CD4-positive, alpha-beta T cell (primary cell): ENCODE measurements at regions of chr2 and their contacts with region 1.

Region 1: GRCh38 chr2:68909793-68910674 is 38.8 kb upstream of the BMP10 start:
- DNase-seq: peak; percentile 44 to 84 (median 66)
- ATAC-seq: no peak
- H3K4me3 ChIP-seq: no peak overlapping the region
- H3K4me3 Mint-ChIP-seq: no peak overlapping the region
- H3K27ac ChIP-seq: no peak overlapping the region
- H3K27ac Mint-ChIP-seq: no peak overlapping the region
- H3K4me1 ChIP-seq: peaks cover 60% of the 10 kb centered on the region
- H3K4me1 Mint-ChIP-seq: peaks cover 36% of the 10 kb centered on the region
- H3K27me3 ChIP-seq: no peaks in the 10 kb centered on the region
- H3K27me3 Mint-ChIP-seq: no peaks in the 10 kb centered on the region
- CTCF ChIP-seq: peak; percentile 88

Region 2: GRCh38 chr2:68709421-68709911 is 200.6 kb before region 1 on chr2:
- CTCF ChIA-PET with region 1: interaction called, 8 read pairs
- POLR2A ChIA-PET with region 1: interaction called, 19 read pairs
- intact Hi-C with region 1: loop called in 1 of 2 experiments (anchors 1 kb)
- DNase-seq: peak in 4 of 14 experiments; percentile 36 to 62 (median 58)
- ATAC-seq: peak; percentile 77
- H3K4me3 ChIP-seq: no peak overlapping the region
- H3K4me3 Mint-ChIP-seq: no peak overlapping the region
- H3K27ac ChIP-seq: no peak overlapping the region
- H3K27ac Mint-ChIP-seq: no peak overlapping the region
- H3K4me1 ChIP-seq: peaks cover 6% of the 10 kb centered on the region
- H3K4me1 Mint-ChIP-seq: peaks cover 28% of the 10 kb centered on the region
- H3K27me3 ChIP-seq: no peaks in the 10 kb centered on the region
- H3K27me3 Mint-ChIP-seq: no peaks in the 10 kb centered on the region
- CTCF ChIP-seq: peak; percentile 92

Region 3: DNA sequence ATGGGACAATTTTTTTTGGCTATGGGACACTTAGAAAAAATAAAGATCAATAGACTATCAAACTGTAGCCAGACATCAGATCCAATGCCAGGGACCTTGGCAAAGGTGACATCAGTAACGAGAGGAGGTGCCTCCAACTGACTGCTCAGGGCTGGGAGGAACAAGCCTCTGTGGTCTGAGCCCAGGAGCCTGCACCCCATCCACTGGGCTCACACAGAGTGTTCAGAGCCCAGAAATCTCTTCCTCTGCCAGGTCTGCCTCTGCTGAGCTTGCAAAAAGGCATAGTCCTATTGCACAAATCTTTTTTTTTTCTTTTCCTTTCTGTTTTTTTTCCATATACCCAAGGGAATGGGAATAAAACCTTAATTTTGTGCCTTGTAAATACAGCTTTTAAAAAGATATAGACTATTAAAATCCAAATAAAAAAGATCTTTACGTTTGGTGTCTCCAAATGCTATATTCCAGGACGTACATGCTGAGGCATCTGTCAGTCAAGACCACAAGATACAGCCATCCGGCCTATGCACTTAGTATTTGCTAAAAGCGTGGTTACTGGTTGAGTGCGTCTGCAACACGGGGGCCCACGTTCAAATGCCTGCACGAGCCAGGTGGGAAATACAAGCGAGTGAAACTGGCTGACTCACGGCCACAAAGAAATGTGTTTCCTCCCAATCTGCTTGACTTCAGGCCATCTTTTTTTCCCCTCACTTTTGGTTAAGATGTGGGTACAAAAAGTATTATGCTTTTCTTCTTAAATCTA is 183.2 kb before region 1 on chr2:
- CTCF ChIA-PET with region 1: no interaction called
- POLR2A ChIA-PET with region 1: interaction called, 23 read pairs
- intact Hi-C with region 1: no loop called
- DNase-seq: peak; percentile 52 to 92 (median 74)
- ATAC-seq: peak; percentile 97
- H3K4me3 ChIP-seq: no peak overlapping the region
- H3K4me3 Mint-ChIP-seq: peak overlapping the region; percentile 46
- H3K27ac ChIP-seq: peak overlapping the region; percentile 10 to 42
- H3K27ac Mint-ChIP-seq: peak overlapping the region; percentile 88
- H3K4me1 ChIP-seq: peaks cover 63% of the 10 kb centered on the region
- H3K4me1 Mint-ChIP-seq: peaks cover 78% of the 10 kb centered on the region
- H3K27me3 ChIP-seq: no peaks in the 10 kb centered on the region
- H3K27me3 Mint-ChIP-seq: no peaks in the 10 kb centered on the region
- CTCF ChIP-seq: no peak

Region 4: GRCh38 chr2:68766376-68766845 is 143.6 kb before region 1 on chr2:
- CTCF ChIA-PET with region 1: interaction called, 3 read pairs
- POLR2A ChIA-PET with region 1: interaction called, 10 read pairs
- intact Hi-C with region 1: no loop called
- DNase-seq: peak; percentile 48 to 89 (median 66)
- ATAC-seq: peak; percentile 71
- H3K4me3 ChIP-seq: peak overlapping the region; percentile 42
- H3K4me3 Mint-ChIP-seq: peak overlapping the region; percentile 84
- H3K27ac ChIP-seq: peak overlapping the region; percentile 89 to 93
- H3K27ac Mint-ChIP-seq: peak overlapping the region; percentile 94
- H3K4me1 ChIP-seq: peaks cover 83% of the 10 kb centered on the region
- H3K4me1 Mint-ChIP-seq: peaks cover 98% of the 10 kb centered on the region
- H3K27me3 ChIP-seq: no peaks in the 10 kb centered on the region
- H3K27me3 Mint-ChIP-seq: no peaks in the 10 kb centered on the region
- CTCF ChIP-seq: no peak

Region 5: DNA sequence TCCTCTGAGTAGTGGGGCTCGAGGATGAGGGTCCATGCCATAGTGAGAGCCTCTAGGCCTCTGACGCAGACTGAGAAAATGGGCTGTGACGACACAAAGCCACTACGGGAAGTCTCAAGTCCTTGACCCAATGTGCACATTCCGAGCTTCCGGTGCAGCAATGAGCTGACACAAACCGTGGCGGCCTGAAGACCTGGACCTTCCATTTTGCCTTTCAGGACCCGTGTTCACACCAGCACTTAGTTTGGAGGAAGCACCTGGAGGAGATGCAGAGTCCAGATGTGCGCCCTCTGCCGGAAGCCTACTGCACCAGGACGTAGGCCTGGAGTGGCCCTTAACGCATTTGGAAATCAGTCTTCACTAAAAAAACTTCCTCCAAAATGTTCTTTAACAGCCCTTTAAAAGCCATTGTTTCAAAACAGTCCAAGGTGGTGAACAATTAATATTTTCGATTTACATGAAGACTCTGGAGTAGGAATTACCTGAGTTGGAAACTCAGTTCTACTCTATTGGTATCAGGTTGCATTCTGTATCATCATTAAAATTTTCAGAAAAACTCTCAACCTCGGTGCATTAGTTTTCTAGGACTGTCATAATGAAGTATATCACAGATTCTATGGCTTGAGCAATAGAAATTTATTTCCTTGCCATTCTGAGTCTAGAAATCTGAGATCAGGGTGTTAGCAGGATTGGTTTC is 72.7 kb before region 1 on chr2:
- CTCF ChIA-PET with region 1: interaction called, 4 read pairs
- POLR2A ChIA-PET with region 1: interaction called, 3 read pairs
- intact Hi-C with region 1: loop called in 1 of 2 experiments (anchors 2 kb)
- DNase-seq: peak; percentile 54 to 86 (median 70)
- ATAC-seq: peak; percentile 85
- H3K4me3 ChIP-seq: no peak overlapping the region
- H3K4me3 Mint-ChIP-seq: no peak overlapping the region
- H3K27ac ChIP-seq: no peak overlapping the region
- H3K27ac Mint-ChIP-seq: peak overlapping the region; percentile 4
- H3K4me1 ChIP-seq: peaks cover 27% of the 10 kb centered on the region
- H3K4me1 Mint-ChIP-seq: peaks cover 38% of the 10 kb centered on the region
- H3K27me3 ChIP-seq: no peaks in the 10 kb centered on the region
- H3K27me3 Mint-ChIP-seq: no peaks in the 10 kb centered on the region
- CTCF ChIP-seq: peak; percentile 84